Heart right ventricle (tissue), 16 donors: ENCODE measurements at regions of chr15 and their contacts with region 1.

Region 1: DNA sequence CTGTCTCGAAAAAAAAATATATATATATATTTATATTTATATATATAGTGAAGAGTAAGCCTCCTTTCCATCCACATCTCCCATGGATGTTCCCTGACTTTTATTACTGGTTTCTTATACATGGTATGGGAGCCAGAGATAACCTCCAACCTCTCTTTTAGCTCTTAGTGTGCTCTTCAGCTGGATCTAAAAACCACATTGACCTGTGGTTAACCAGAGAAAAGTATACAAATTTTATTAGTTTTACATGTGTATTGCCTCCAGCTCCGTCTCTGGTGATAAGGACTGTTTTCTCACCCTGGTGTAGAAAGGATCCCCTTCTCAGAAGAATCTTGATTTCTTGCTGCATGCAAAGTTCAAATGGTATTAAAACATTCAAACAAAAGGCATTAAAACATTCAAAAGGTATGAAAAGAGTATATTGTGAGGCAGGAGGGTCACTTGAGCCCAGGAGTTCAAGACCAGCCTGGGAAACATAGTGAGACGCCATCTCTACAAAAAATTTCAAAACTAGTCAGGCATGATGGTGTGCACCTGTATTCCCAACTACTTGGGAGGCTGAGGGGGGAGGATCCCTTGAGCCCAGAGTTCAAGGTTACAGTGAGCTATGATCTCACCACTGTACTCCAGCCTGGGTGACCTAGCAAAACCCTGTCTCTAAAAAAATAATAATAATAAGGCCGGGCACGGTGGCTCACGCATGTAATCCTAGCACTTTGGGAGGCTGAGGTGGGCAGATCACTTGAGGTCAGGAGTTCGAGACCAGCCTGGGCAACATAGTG is 13.5 kb upstream of the TTBK2 start:
- DNase-seq: no peak
- ATAC-seq: no peak
- H3K4me3 ChIP-seq: no peak overlapping the region
- H3K27ac ChIP-seq: no peak overlapping the region
- H3K4me1 ChIP-seq: peaks cover 0 to 9% (median 0%) of the 10 kb centered on the region in 9 donors
- H3K27me3 ChIP-seq: no peaks in the 10 kb centered on the region
- CTCF ChIP-seq: no peak

Region 2: DNA sequence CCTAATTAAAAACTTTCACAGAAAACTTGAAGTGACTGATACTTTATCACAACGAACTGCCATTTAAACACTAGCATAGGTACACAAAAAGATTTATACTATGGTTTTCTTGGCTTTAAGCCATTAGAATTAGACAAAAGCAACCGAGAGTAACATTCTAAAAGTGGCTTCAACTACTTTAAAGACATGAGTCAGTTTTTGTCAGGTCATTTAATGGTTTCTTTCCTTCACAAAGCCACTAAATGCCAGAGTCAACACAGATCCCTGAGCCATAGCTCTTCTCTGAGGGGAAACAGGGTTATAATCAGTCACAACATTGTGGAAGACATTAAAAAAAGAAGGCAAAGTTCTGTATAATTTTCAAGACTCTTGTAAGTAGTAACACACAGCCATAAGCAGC is 520.2 kb before region 1 on chr15:
- intact Hi-C with region 1: no loop called
- DNase-seq: no peak
- ATAC-seq: no peak
- H3K4me3 ChIP-seq: no peak overlapping the region
- H3K27ac ChIP-seq: peak overlapping the region in 7 of 10 donors; percentile 9 to 48 (median 19)
- H3K4me1 ChIP-seq: peaks cover 0 to 16% (median 8%) of the 10 kb centered on the region in 9 donors
- H3K27me3 ChIP-seq: no peaks in the 10 kb centered on the region
- CTCF ChIP-seq: no peak

Region 3: GRCh38 chr15:42704492-42704926 is 229.6 kb before region 1 on chr15:
- intact Hi-C with region 1: loop called in 4 of 10 experiments (anchors 5 to 10 kb)
- DNase-seq: peak in 1 of 2 donors; percentile 52
- ATAC-seq: peak; percentile 82 to 96 (median 94)
- H3K4me3 ChIP-seq: no peak overlapping the region
- H3K27ac ChIP-seq: no peak overlapping the region
- H3K4me1 ChIP-seq: peaks cover 0 to 5% (median 0%) of the 10 kb centered on the region in 9 donors
- H3K27me3 ChIP-seq: no peaks in the 10 kb centered on the region
- CTCF ChIP-seq: peak; percentile 57 to 84 (median 80)

Region 4: DNA sequence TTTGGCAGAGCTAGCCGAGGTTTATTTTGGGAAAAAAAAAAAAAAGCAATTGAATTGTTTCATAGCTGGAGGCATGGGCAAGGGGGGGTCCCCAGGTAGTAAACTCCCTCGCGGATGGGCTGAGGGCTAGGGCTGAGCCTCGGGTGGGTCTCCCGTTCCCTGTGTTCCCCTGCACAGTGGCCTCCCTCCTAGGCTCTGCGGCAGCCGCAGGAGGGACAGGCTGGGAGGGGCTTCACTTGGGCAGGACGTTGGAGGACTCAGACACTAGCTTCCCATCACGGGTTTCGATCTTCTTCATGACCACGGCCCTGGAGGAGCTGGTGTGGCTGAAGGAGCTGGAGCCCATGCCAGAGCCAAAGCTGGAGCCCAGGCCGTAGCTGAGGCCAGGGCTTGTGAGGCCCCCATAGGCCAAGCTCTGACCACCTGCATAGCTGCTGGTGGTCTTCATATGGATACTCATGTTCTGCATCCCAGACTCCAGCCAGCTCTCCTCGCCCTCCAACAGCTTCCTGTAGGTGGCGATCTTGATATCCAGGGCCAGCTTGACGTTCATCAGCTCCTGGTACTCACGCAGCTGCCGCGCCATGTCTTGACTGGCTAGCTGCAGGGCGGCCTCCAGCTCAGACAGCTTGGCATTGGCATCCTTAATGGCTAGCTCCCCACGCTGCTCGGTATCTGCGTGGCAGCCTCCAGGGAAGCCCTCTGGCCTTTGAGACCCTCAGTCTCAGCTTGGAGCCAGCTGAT is 133.2 kb before region 1 on chr15:
- intact Hi-C with region 1: loop called in 7 of 10 experiments (anchors 5 to 10 kb)
- DNase-seq: no peak
- ATAC-seq: no peak
- H3K4me3 ChIP-seq: no peak overlapping the region
- H3K27ac ChIP-seq: no peak overlapping the region
- H3K4me1 ChIP-seq: peaks cover 0 to 8% (median 0%) of the 10 kb centered on the region in 9 donors
- H3K27me3 ChIP-seq: no peaks in the 10 kb centered on the region
- CTCF ChIP-seq: peak in 5 of 9 donors; percentile 9 to 30 (median 18)

Region 5: GRCh38 chr15:42984493-42985034 is 50.5 kb after region 1 on chr15:
- intact Hi-C with region 1: no loop called
- DNase-seq: no peak
- ATAC-seq: no peak
- H3K4me3 ChIP-seq: no peak overlapping the region
- H3K27ac ChIP-seq: no peak overlapping the region
- H3K4me1 ChIP-seq: no peaks in the 10 kb centered on the region
- H3K27me3 ChIP-seq: no peaks in the 10 kb centered on the region
- CTCF ChIP-seq: peak in 1 of 9 donors; percentile 26